Activated T-helper 1 cell treated with anti-CD3 and anti-CD28 coated beads, Interleukin-12 subunit alpha, Interleukin-12 subunit beta, Interleukin-2, Interleukin-4 antibody, amounts not matched to agents 30 ng/mL and 10 ng/mL and 1 ng/mL, durations not matched to agents 14 hours and 24 hours and 36 hours (primary cell): ENCODE measurements at regions of chr4 and their contacts with region 1.

Region 1: GRCh38 chr4:101205916-101206315 is 141.4 kb downstream of the PPP3CA start:
- DNase-seq: peak; percentile 56
- H3K4me3 Mint-ChIP-seq: peak overlapping the region; percentile 0
- H3K27ac Mint-ChIP-seq: peak overlapping the region; percentile 67
- H3K4me1 Mint-ChIP-seq: peaks cover 42% of the 10 kb centered on the region
- H3K27me3 Mint-ChIP-seq: no peaks in the 10 kb centered on the region

Region 2: GRCh38 chr4:101126059-101126458 is 79.9 kb before region 1 on chr4:
- intact Hi-C with region 1: no loop called
- DNase-seq: no peak
- H3K4me3 Mint-ChIP-seq: no peak overlapping the region
- H3K27ac Mint-ChIP-seq: no peak overlapping the region
- H3K4me1 Mint-ChIP-seq: peaks cover 6% of the 10 kb centered on the region
- H3K27me3 Mint-ChIP-seq: no peaks in the 10 kb centered on the region

Region 3: DNA sequence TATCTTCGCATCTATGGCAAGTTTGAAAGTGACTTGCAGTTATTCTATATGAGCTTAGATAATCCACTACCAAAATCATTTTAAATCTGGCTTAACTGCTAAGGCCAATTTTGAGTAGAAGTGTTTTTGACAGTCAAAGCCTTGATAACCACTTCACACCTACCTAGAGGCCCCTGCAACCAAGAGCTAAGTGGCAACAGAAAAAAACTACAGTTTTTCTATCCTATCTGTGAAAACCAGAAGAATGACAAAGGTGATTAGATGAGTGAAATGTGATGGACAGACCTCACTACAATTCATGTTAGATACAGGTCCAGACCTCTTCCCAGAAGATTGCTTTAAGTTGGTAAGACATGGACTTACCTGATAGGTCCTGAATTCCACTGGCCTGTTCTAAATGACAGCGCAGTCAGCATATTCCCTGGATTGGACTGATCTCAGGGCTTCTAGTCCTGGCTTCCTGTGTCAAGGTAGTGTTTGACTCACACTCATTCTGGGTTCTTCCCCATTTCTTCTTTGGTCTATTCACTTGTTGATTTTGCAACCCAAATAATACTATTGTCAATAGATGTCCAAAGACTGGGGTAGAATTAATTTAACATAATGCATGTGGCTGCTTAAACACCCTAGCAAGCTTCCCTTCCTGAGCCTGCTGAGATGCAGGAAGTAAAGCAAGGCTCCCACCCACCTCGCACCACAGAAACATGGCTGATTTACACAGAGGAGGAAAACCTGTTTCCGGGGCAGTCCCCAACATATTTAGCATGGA is 76.3 kb after region 1 on chr4:
- intact Hi-C with region 1: loop called (anchors 2 kb)
- DNase-seq: peak; percentile 8
- H3K4me3 Mint-ChIP-seq: peak overlapping the region; percentile 31
- H3K27ac Mint-ChIP-seq: no peak overlapping the region
- H3K4me1 Mint-ChIP-seq: peaks cover 43% of the 10 kb centered on the region
- H3K27me3 Mint-ChIP-seq: no peaks in the 10 kb centered on the region

Region 4: GRCh38 chr4:101400096-101400495 is 194.2 kb after region 1 on chr4:
- intact Hi-C with region 1: loop called (anchors 5 kb)
- DNase-seq: peak; percentile 12
- H3K4me3 Mint-ChIP-seq: peak overlapping the region; percentile 2
- H3K27ac Mint-ChIP-seq: peak overlapping the region; percentile 71
- H3K4me1 Mint-ChIP-seq: peaks cover 22% of the 10 kb centered on the region
- H3K27me3 Mint-ChIP-seq: peaks cover 6% of the 10 kb centered on the region

Region 5: GRCh38 chr4:101596781-101597552 is 391.1 kb after region 1 on chr4:
- intact Hi-C with region 1: no loop called
- DNase-seq: no peak
- H3K4me3 Mint-ChIP-seq: no peak overlapping the region
- H3K27ac Mint-ChIP-seq: no peak overlapping the region
- H3K4me1 Mint-ChIP-seq: peaks cover 12% of the 10 kb centered on the region
- H3K27me3 Mint-ChIP-seq: no peaks in the 10 kb centered on the region

Region 6: GRCh38 chr4:102007959-102008425 is 802.1 kb after region 1 on chr4:
- intact Hi-C with region 1: no loop called
- DNase-seq: no peak
- H3K4me3 Mint-ChIP-seq: no peak overlapping the region
- H3K27ac Mint-ChIP-seq: no peak overlapping the region
- H3K4me1 Mint-ChIP-seq: no peaks in the 10 kb centered on the region
- H3K27me3 Mint-ChIP-seq: peaks cover 7% of the 10 kb centered on the region